ENCODE measurements at regions of chr12 and their contacts with region 1.

Region 1: GRCh38 chr12:6335451-6336078 is 6.3 kb downstream of the TNFRSF1A start:
- DNase-seq: peak; percentile 80 to 90 (median 82)
- H3K4me3 ChIP-seq: peak overlapping the region; percentile 61 to 64
- H3K4me3 Mint-ChIP-seq: no peak overlapping the region
- H3K27ac ChIP-seq: peak overlapping the region; percentile 92
- H3K27ac Mint-ChIP-seq: peak overlapping the region in 1 of 7 donors; percentile 96
- H3K4me1 ChIP-seq: peaks cover 83% of the 10 kb centered on the region
- H3K4me1 Mint-ChIP-seq: peaks cover 7 to 38% (median 32%) of the 10 kb centered on the region in 4 donors
- H3K27me3 ChIP-seq: no peaks in the 10 kb centered on the region
- H3K27me3 Mint-ChIP-seq: no peaks in the 10 kb centered on the region

Region 2: GRCh38 chr12:6167327-6168259 is 168.0 kb before region 1 on chr12:
- CTCF ChIA-PET with region 1: no interaction called
- POLR2A ChIA-PET with region 1: no interaction called
- intact Hi-C with region 1: no loop called
- DNase-seq: peak in 1 of 5 donors; percentile 46
- H3K4me3 ChIP-seq: no peak overlapping the region
- H3K4me3 Mint-ChIP-seq: peak overlapping the region in 3 of 8 donors; percentile 17 to 63 (median 30)
- H3K27ac ChIP-seq: no peak overlapping the region
- H3K27ac Mint-ChIP-seq: peak overlapping the region in 2 of 7 donors; percentile 58 to 76
- H3K4me1 ChIP-seq: peaks cover 17% of the 10 kb centered on the region
- H3K4me1 Mint-ChIP-seq: peaks cover 15 to 22% (median 19%) of the 10 kb centered on the region in 4 donors
- H3K27me3 ChIP-seq: no peaks in the 10 kb centered on the region
- H3K27me3 Mint-ChIP-seq: peaks cover 8% of the 10 kb centered on the region in 2 donors

Region 3: DNA sequence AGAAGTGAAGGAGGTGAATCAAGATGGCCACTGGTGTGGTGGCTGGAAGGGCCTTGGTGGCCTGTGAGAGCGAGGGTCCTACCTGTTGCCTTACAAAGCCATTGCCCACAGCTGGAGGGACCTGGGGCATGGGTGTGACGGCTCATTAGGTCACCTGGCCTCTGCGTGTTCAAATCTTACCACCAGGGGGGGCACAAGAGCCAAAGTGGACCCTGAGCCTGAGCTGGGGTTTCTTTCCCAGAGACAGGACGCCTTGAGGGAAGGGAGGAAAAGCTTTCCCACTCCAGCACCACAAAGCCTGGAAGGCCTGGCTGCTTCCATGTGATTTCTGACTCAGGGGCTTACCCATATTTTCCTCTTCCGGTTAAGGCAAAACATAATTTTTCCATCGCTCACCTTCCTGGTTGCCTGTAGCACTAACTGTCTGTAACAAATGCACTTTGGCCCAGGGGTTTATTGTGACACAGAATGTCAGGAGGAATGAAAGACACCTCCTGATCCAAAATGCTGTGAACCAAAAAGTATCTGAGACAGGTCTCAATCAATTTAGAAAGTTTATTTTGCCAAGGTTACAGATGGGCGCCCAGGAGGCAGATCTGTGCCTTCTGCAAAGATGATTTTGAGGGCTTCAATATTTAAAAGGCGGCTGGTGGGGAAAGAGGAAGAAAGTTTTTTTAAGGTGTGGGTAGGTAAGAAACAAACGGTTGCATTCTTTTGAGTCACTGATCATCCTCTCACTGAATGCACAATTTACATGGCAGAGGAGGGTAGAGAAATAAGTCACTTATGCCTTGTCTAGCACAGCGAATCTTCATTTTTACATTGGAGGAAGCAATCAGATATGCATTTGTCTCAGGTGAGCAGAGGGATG is 139.7 kb before region 1 on chr12:
- CTCF ChIA-PET with region 1: no interaction called
- POLR2A ChIA-PET with region 1: no interaction called
- intact Hi-C with region 1: no loop called
- DNase-seq: peak; percentile 55 to 72 (median 56)
- H3K4me3 ChIP-seq: no peak overlapping the region
- H3K4me3 Mint-ChIP-seq: no peak overlapping the region
- H3K27ac ChIP-seq: no peak overlapping the region
- H3K27ac Mint-ChIP-seq: no peak overlapping the region
- H3K4me1 ChIP-seq: peaks cover 6% of the 10 kb centered on the region
- H3K4me1 Mint-ChIP-seq: no peaks in the 10 kb centered on the region
- H3K27me3 ChIP-seq: peaks cover 8% of the 10 kb centered on the region
- H3K27me3 Mint-ChIP-seq: peaks cover 6 to 36% of the 10 kb centered on the region in 2 donors

Region 4: GRCh38 chr12:6355491-6356371 is 20.2 kb after region 1 on chr12:
- CTCF ChIA-PET with region 1: interaction called, 155 read pairs
- POLR2A ChIA-PET with region 1: interaction called, 14 read pairs
- intact Hi-C with region 1: no loop called
- DNase-seq: no peak
- H3K4me3 ChIP-seq: no peak overlapping the region
- H3K4me3 Mint-ChIP-seq: no peak overlapping the region
- H3K27ac ChIP-seq: no peak overlapping the region
- H3K27ac Mint-ChIP-seq: no peak overlapping the region
- H3K4me1 ChIP-seq: no peaks in the 10 kb centered on the region
- H3K4me1 Mint-ChIP-seq: peaks cover 0 to 5% (median 2%) of the 10 kb centered on the region in 4 donors
- H3K27me3 ChIP-seq: no peaks in the 10 kb centered on the region
- H3K27me3 Mint-ChIP-seq: peaks cover 0 to 2% of the 10 kb centered on the region in 2 donors

Region 5: GRCh38 chr12:6423267-6424007 is 87.9 kb after region 1 on chr12:
- CTCF ChIA-PET with region 1: interaction called, 49 read pairs
- POLR2A ChIA-PET with region 1: interaction called, 13 read pairs
- intact Hi-C with region 1: loop called (anchors 1 kb)
- DNase-seq: peak; percentile 83 to 86 (median 85)
- H3K4me3 ChIP-seq: no peak overlapping the region
- H3K4me3 Mint-ChIP-seq: peak overlapping the region in 6 of 8 donors; percentile 12 to 56 (median 31)
- H3K27ac ChIP-seq: peak overlapping the region; percentile 8
- H3K27ac Mint-ChIP-seq: peak overlapping the region; percentile 68 to 90 (median 82)
- H3K4me1 ChIP-seq: peaks cover 42% of the 10 kb centered on the region
- H3K4me1 Mint-ChIP-seq: peaks cover 28 to 38% (median 33%) of the 10 kb centered on the region in 4 donors
- H3K27me3 ChIP-seq: no peaks in the 10 kb centered on the region
- H3K27me3 Mint-ChIP-seq: peaks cover 0 to 6% of the 10 kb centered on the region in 2 donors

Region 6: DNA sequence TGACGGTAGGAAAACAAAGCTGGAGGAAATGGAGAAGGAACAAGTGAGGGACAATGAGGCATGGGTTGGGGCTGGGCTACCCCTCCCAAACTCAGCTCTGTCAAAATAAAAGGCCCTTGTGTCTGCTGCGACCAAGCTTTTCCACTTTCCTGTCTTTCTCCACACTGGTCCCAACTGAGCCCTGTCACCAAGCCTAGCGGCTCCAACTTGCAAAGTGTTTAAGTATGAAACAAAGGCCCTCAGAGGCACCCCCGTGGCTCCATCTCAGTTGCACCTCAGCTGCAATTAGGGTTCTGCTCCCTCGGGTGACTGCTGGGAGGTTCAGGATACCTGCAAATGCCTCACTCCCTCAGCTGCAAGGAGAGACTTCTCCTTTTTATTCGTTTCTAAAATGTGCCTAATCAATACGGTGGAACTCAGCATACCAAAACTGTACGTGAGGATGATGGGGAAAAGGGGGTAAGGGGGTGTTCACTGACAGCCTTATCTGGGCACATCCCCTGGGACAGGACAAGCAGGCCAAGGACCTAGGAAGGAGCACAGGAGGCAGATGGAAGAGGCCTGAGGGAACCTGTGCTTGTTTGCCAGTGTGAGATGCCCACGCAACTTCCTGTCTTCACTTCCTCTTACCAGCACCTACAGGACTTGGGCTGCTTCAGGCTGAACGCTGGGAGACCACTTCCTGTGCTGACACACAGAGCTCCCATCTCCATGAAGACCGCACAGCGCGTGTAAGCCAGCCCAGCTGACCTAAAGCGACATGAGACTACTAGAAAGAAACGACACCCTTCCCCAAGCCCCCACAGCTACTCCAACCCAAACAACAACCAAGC is 126.1 kb after region 1 on chr12:
- CTCF ChIA-PET with region 1: interaction called, 56 read pairs
- POLR2A ChIA-PET with region 1: interaction called, 80 read pairs
- intact Hi-C with region 1: loop called (anchors 2 kb)
- DNase-seq: peak; percentile 82 to 96 (median 86)
- H3K4me3 ChIP-seq: peak overlapping the region in 1 of 2 donors; percentile 42
- H3K4me3 Mint-ChIP-seq: peak overlapping the region; percentile 53 to 89 (median 80)
- H3K27ac ChIP-seq: peak overlapping the region; percentile 82
- H3K27ac Mint-ChIP-seq: peak overlapping the region; percentile 90 to 99 (median 98)
- H3K4me1 ChIP-seq: peaks cover 89% of the 10 kb centered on the region
- H3K4me1 Mint-ChIP-seq: peaks cover 65 to 93% (median 80%) of the 10 kb centered on the region in 4 donors
- H3K27me3 ChIP-seq: no peaks in the 10 kb centered on the region
- H3K27me3 Mint-ChIP-seq: no peaks in the 10 kb centered on the region

Region 7: DNA sequence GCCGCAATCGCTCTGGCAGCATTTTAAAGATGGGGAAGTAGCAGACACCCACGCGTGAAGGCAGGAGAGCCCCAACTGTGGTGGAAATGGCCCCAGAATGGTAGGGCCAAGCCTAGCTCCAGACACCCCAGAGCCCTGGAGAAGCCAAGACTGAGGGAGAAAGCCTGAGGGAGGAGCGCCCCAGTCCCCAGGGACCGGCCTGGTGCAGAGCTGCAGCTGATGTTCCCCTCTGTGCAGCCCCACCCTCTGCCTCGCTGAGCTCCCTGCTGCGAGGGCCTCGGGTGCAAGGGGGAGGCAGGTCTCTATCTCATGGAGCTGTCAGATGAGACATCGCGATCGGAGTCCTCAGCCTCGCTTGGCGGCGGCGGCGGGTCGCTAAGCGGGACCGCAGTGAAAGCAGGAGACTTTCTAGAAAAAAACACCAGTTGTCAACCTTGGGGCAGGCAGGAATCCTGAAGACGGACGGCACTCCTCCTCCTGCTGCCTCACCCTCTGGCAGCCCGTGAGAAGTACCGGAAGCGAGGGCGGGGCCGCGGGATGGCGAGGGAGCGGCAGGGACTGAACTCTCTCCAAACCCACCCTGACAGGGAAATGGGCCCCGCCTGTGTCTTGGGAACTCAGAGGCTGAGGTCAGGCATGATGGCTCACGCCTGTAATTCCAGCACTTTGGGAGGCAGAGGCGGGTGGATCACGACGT is 204.8 kb after region 1 on chr12:
- CTCF ChIA-PET with region 1: interaction called, 30 read pairs
- POLR2A ChIA-PET with region 1: interaction called, 43 read pairs
- intact Hi-C with region 1: loop called (anchors 1 kb)
- DNase-seq: peak; percentile 30 to 63 (median 33)
- H3K4me3 ChIP-seq: peak overlapping the region in 1 of 2 donors; percentile 22
- H3K4me3 Mint-ChIP-seq: peak overlapping the region in 7 of 8 donors; percentile 43 to 87 (median 80)
- H3K27ac ChIP-seq: peak overlapping the region; percentile 37
- H3K27ac Mint-ChIP-seq: peak overlapping the region; percentile 80 to 93 (median 89)
- H3K4me1 ChIP-seq: peaks cover 70% of the 10 kb centered on the region
- H3K4me1 Mint-ChIP-seq: peaks cover 31 to 61% (median 51%) of the 10 kb centered on the region in 4 donors
- H3K27me3 ChIP-seq: no peaks in the 10 kb centered on the region
- H3K27me3 Mint-ChIP-seq: no peaks in the 10 kb centered on the region

Measured in CD4-positive, alpha-beta memory T cell (primary cell).